Colonic mucosa (tissue), 4 donors: ENCODE measurements at regions of chr2 and their contacts with region 1.

Region 1: DNA sequence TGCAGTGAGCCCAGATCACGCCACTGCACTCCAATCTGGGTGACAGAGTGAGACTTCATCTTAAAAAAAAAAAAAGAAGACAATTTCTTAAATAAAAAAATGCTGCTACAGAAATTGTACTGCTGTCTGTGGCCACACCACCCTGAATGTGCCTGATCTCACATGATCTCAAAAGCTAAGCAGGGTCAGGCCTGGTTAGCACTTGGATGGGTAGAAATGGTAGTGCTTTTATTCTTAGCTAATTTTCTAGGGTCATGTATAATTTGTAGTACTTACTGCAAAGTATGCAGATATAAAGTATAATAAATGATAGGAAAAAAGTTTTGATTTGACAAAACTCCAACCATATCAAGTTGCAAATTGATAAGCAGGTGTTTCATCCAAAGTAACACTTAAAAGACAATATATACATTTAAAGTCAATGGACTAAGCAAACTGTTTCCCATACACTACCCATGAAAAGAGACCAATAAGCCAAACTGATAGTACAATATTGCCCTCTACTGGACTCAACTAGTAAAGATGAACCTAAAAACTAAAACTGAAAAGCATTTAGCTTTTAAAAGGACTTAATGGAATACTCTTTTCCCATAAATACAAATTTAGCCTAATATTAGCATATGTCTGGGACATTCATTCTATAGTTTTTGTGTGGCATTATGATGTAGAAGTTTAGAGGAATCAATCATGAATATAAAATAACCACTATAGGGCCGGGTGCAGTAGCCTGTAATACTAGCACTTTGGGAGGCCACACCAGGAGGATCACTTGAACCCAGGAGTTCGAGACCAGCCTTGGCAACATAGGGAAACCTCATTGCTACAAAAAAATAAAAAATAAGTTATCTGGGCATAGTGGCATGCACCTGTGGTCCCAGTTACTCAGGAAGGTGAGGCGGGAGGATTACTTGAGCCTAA is 18.6 kb upstream of the PEX13 start:
- DNase-seq: no peak
- H3K4me3 ChIP-seq: no peak overlapping the region
- H3K27ac ChIP-seq: no peak overlapping the region
- H3K4me1 ChIP-seq: no peaks in the 10 kb centered on the region
- H3K27me3 ChIP-seq: no peaks in the 10 kb centered on the region
- CTCF ChIP-seq: peak; percentile 53

Region 2: DNA sequence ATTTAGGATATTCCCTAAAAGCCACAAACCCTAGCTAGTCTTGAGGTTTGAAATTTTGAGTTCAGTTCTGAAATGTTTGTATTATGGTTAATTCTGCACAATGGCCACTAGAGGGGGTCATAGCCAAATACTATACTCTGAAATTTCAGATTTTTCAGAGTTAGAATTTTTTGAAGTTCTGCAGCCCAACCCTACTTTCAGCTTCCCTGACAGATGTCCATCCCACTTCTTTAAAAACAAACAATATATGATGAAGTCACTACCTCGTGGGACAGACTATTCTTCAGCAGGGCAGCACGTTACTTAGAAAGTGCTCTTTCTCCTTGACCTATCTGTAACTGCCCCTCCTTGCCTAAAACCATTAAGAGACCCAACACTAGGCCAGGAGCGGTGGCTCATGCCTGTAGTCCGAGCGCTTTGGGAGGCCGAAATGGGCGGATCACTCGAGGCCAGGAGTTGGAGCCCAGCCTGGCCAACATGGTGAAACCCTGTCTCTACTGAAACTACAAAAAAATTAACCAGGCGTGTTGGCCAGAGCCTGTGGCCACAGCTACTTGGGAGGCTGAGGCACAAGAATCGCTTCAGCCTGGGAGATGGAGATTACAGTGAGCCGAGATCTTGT is 291.0 kb before region 1 on chr2:
- intact Hi-C with region 1: loop called (anchors 2 kb)
- DNase-seq: no peak
- H3K4me3 ChIP-seq: no peak overlapping the region
- H3K27ac ChIP-seq: no peak overlapping the region
- H3K4me1 ChIP-seq: no peaks in the 10 kb centered on the region
- H3K27me3 ChIP-seq: no peaks in the 10 kb centered on the region
- CTCF ChIP-seq: peak; percentile 74

Region 3: GRCh38 chr2:60794277-60794863 is 204.5 kb before region 1 on chr2:
- intact Hi-C with region 1: loop called (anchors 5 kb)
- DNase-seq: no peak
- H3K4me3 ChIP-seq: no peak overlapping the region
- H3K27ac ChIP-seq: no peak overlapping the region
- H3K4me1 ChIP-seq: no peaks in the 10 kb centered on the region
- H3K27me3 ChIP-seq: no peaks in the 10 kb centered on the region
- CTCF ChIP-seq: peak; percentile 45

Region 4: DNA sequence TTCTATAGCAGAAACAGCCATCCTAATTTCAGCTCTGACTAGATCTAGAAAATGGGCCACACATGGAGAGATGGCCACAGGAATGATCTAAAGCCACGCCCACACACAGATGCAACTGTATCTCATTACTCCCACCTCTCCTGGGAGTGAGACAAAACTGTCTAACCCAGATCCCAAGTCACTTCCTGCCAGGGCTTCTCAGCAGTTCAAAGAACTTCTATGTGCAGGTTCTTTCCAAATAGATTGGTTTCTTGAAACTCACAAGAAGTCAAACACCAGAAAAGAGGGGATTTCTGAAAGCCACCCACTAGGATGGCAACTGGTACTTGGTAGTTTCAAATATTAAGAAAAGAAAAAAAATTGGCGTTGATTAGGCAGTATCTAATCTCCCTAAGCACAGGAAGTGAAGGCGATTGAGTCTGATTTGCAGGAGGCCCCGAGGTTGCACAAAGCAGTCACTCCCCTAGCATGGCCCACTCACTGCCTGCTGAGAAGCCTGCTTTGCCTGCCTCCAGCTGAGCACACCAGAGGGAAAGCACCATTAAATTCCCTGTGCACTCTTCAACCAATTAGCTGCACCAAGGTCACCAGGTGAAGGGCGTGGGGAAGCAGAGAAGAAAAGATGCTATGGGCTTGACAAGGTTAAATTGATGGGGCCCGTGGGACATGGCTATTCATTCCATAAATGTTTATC is 191.8 kb before region 1 on chr2:
- intact Hi-C with region 1: loop called (anchors 5 kb)
- DNase-seq: no peak
- H3K4me3 ChIP-seq: no peak overlapping the region
- H3K27ac ChIP-seq: no peak overlapping the region
- H3K4me1 ChIP-seq: no peaks in the 10 kb centered on the region
- H3K27me3 ChIP-seq: no peaks in the 10 kb centered on the region
- CTCF ChIP-seq: no peak

Region 5: GRCh38 chr2:61055557-61055956 is 56.7 kb after region 1 on chr2:
- intact Hi-C with region 1: no loop called
- DNase-seq: no peak
- H3K4me3 ChIP-seq: no peak overlapping the region
- H3K27ac ChIP-seq: no peak overlapping the region
- H3K4me1 ChIP-seq: no peaks in the 10 kb centered on the region
- H3K27me3 ChIP-seq: no peaks in the 10 kb centered on the region
- CTCF ChIP-seq: no peak